GM12878 (cell line): ENCODE measurements at regions of chr13 and their contacts with region 1.

Region 1: DNA sequence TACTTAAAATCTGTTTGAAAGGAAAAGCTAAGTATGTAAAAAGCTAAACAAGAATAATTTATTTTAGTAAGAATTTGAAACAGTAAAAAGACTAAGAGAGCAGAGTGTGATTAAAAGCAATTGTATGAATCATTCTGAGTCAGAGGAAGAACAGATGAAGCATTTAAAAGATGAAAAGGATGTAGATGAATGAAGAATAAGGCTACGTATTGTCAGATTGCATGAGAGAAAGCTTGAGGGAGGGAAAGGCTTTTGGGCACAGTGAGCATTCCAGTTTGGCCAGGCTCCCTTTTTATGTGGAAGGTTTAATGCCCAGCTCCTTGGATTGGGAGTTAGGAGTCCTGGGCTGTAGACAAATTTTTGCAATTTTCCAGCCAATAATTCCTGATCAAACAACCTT is 117.7 kb downstream of the FREM2 start:
- DNase-seq: no peak
- ATAC-seq: no peak
- H3K4me3 ChIP-seq: no peak overlapping the region
- H3K27ac ChIP-seq: no peak overlapping the region
- H3K4me1 ChIP-seq: no peaks in the 10 kb centered on the region
- H3K27me3 ChIP-seq: no peaks in the 10 kb centered on the region
- CTCF ChIP-seq: no peak
- EP300 ChIP-seq: no peak
- POLR2A ChIP-seq: no peak
- RAD21 ChIP-seq: no peak

Region 2: DNA sequence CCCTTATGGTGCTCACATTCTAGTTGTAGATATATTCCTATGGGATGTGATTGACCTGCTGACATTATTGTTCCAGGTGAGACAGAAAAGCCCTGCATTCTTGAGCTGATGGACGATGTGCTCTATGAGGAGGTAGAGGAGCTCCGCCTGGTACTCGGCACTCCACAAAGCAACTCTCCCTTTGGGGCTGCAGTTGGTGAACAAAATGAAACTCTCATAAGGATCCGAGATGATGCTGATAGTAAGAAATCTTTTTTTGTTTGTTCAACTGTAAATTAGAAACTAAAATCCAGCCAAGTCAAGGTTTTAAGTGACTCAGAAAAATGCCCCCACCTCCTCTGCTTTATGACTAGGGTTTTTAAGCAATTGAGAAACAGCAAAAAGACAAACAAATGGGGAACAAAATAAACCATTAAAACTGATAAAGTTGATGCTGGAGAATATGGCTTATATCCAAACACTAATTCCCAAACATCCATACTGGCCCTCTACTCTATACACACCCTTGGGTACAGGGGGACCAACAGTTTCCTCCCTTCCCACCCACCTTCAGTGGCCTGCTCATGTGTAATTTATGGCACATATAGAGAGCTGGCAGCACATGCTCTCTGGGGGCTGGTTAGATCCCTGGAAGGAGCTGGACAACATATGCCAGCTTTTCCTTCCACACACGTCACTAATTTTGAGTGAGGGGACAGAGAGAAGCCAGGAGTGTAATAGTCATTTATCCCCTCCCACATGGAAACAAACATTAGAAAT is 46.5 kb after region 1 on chr13:
- CTCF ChIA-PET with region 1: no interaction called
- POLR2A ChIA-PET with region 1: no interaction called
- RAD21 ChIA-PET with region 1: no interaction called
- SMC1A ChIA-PET with region 1: no interaction called
- in situ Hi-C with region 1: loop called (anchors 5 kb)
- intact Hi-C with region 1: no loop called
- DNase-seq: no peak
- ATAC-seq: peak; percentile 92
- H3K4me3 ChIP-seq: no peak overlapping the region
- H3K27ac ChIP-seq: no peak overlapping the region
- H3K4me1 ChIP-seq: no peaks in the 10 kb centered on the region
- H3K27me3 ChIP-seq: no peaks in the 10 kb centered on the region
- CTCF ChIP-seq: no peak
- EP300 ChIP-seq: no peak
- POLR2A ChIP-seq: no peak
- RAD21 ChIP-seq: no peak